Aorta (tissue), 5 donors: ENCODE measurements at regions of chr9 and their contacts with region 1.

Region 1: GRCh38 chr9:132160802-132161742 is 786 bp upstream of the NTNG2 start:
- DNase-seq: no peak
- ATAC-seq: no peak
- H3K4me3 ChIP-seq: peak overlapping the region; percentile 81
- H3K27ac ChIP-seq: no peak overlapping the region
- H3K4me1 ChIP-seq: no peaks in the 10 kb centered on the region
- H3K27me3 ChIP-seq: no peaks in the 10 kb centered on the region

Region 2: GRCh38 chr9:131769356-131769755 is 391.7 kb before region 1 on chr9:
- intact Hi-C with region 1: loop called in 1 of 2 experiments (anchors 5 kb)
- DNase-seq: peak in 1 of 2 donors; percentile 23
- ATAC-seq: no peak
- H3K4me3 ChIP-seq: no peak overlapping the region
- H3K27ac ChIP-seq: no peak overlapping the region
- H3K4me1 ChIP-seq: no peaks in the 10 kb centered on the region
- H3K27me3 ChIP-seq: peaks cover 0 to 2% of the 10 kb centered on the region in 2 donors